ENCODE measurements at regions of chr5 and their contacts with region 1.

Region 1: GRCh38 chr5:132820162-132820754 is 7.2 kb downstream of the SOWAHA start:
- DNase-seq: peak; percentile 91 to 94
- H3K4me3 ChIP-seq: no peak overlapping the region
- H3K27ac ChIP-seq: no peak overlapping the region
- H3K4me1 ChIP-seq: peaks cover 3 to 12% of the 10 kb centered on the region in 2 donors
- H3K27me3 ChIP-seq: no peaks in the 10 kb centered on the region
- CTCF ChIP-seq: peak; percentile 74 to 91 (median 84)
- POLR2A ChIP-seq: no peak

Region 2: DNA sequence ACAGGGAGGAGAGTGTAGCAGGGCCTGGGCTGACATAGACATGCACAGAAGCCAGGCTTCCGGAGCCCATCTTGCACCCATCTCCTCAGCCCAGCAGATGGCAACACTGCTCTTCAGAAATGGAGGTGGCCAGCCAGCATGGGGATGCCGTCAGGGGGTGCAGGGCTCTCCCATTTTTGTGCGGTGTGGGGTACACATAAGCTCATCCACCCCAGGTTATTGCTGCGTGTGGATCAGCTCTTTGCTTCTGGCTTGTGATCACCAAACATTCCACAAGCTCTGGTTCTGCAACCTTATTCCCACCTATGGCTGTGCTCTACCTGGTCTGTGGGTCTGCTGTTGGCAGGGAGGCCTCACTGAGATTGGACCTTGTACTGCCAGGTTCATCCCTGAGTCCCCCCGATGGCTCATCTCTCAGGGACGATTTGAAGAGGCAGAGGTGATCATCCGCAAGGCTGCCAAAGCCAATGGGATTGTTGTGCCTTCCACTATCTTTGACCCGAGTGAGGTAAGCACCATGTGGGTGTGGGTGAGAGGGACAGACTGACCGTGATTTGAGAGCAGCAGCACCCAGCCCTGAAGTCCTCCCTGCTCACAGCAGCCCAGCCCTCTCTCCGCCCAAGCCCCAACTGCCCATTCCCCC is 433.5 kb before region 1 on chr5:
- intact Hi-C with region 1: loop called (anchors 10 kb)
- DNase-seq: peak; percentile 66 to 67
- H3K4me3 ChIP-seq: no peak overlapping the region
- H3K27ac ChIP-seq: peak overlapping the region; percentile 89 to 93 (median 92)
- H3K4me1 ChIP-seq: peaks cover 24 to 59% of the 10 kb centered on the region in 2 donors
- H3K27me3 ChIP-seq: no peaks in the 10 kb centered on the region
- CTCF ChIP-seq: peak; percentile 45 to 83 (median 80)
- POLR2A ChIP-seq: no peak

Region 3: GRCh38 chr5:132530946-132531345 is 289.3 kb before region 1 on chr5:
- intact Hi-C with region 1: loop called (anchors 10 kb)
- DNase-seq: no peak
- H3K4me3 ChIP-seq: no peak overlapping the region
- H3K27ac ChIP-seq: no peak overlapping the region
- H3K4me1 ChIP-seq: no peaks in the 10 kb centered on the region
- H3K27me3 ChIP-seq: no peaks in the 10 kb centered on the region
- CTCF ChIP-seq: no peak
- POLR2A ChIP-seq: no peak

Region 4: DNA sequence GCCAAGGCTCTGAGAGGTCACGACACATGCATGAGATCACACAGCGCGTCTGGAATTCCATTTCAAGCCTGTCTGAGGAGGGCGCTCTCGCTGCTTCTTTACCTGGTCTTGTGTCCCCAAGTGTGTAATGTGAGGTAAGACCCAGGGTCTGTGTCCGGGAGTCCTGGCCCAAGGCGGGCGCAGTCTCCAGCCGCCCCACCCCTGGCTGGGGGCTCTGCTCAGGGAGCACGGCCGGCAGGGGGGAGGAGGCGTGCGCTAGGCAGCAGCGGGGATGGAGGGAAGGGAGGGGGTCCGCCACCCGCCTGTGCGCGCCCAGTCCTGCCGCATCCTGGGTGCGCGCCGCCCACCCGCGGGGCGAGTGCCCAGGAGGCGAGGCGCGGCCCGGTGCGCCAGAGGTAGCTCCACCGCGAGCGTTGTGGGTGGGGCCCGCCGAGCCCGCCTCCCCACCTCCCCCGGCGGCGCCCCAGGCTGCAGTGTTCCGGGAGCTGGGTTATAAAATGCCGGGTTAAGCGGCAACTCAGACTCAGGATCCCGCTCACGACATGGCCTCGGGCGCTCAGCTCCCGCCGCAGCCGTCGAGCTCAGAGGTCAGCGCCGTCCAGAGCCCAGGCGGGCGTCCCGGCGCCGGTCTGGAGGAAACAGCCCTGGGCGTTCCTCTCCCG is 73.2 kb before region 1 on chr5 and contains the start of gene CCNI2:
- intact Hi-C with region 1: loop called (anchors 10 kb)
- DNase-seq: peak; percentile 60 to 71
- H3K4me3 ChIP-seq: peak within 1 kb of the TSS; percentile 18 to 66 (median 47)
- H3K27ac ChIP-seq: no peak within 1 kb of the TSS
- H3K4me1 ChIP-seq: peaks cover 0 to 15% of the 10 kb centered on the region in 2 donors
- H3K27me3 ChIP-seq: no peaks in the 10 kb centered on the region
- CTCF ChIP-seq: peak in 4 of 6 experiments; percentile 25 to 42 (median 35)
- POLR2A ChIP-seq: peak in 1 of 2 donors; percentile 30
- total RNA-seq, gene CCNI2: 0.34 to 0.81 (median 0.67) TPM in 3 of 4 donors, not detected in the other

Region 5: GRCh38 chr5:132759114-132760048 is 60.9 kb before region 1 on chr5:
- intact Hi-C with region 1: no loop called
- DNase-seq: no peak
- H3K4me3 ChIP-seq: no peak overlapping the region
- H3K27ac ChIP-seq: no peak overlapping the region
- H3K4me1 ChIP-seq: no peaks in the 10 kb centered on the region
- H3K27me3 ChIP-seq: no peaks in the 10 kb centered on the region
- CTCF ChIP-seq: no peak
- POLR2A ChIP-seq: no peak